ENCODE measurements at regions of chr13 and their contacts with region 1.

Region 1: GRCh38 chr13:77239312-77239711 is 87.6 kb downstream of the MYCBP2 start:
- DNase-seq: no peak
- ATAC-seq: no peak
- H3K4me3 ChIP-seq: no peak overlapping the region
- H3K27ac ChIP-seq: no peak overlapping the region
- H3K4me1 ChIP-seq: no peaks in the 10 kb centered on the region
- H3K27me3 ChIP-seq: no peaks in the 10 kb centered on the region
- CTCF ChIP-seq: no peak

Region 2: GRCh38 chr13:77305276-77305675 is 66.0 kb after region 1 on chr13:
- CTCF ChIA-PET with region 1: no interaction called
- POLR2A ChIA-PET with region 1: interaction called, 10 read pairs
- in situ Hi-C with region 1: no loop called
- intact Hi-C with region 1: no loop called
- DNase-seq: no peak
- ATAC-seq: no peak
- H3K4me3 ChIP-seq: no peak overlapping the region
- H3K27ac ChIP-seq: no peak overlapping the region
- H3K4me1 ChIP-seq: peaks cover 7% of the 10 kb centered on the region
- H3K27me3 ChIP-seq: no peaks in the 10 kb centered on the region
- CTCF ChIP-seq: no peak

Measured in Panc1 (cell line).